Natural killer cell (primary cell): ENCODE measurements at regions of chr15 and their contacts with region 1.

Region 1: DNA sequence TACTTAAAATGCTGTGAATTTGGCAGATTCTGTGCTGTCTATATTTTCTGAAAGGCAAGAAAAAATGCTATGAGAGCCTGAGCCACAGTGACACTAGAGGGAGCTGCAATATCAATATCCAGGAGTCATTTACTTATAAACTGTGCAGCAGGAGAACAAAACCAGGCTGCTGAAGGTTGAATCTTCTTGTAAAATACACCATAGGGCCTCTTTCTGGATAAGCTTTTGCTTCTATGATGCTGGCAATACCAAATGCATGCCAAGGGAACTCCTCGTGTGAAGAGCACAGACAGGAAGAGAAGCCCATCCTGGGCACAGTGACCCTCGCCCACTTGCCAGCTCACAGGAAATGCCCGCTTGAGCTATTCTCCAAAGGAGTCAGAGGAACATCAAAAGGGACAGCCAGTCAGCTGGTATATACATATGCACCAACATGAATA is 48.0 kb upstream of the TSPAN3 start:
- DNase-seq: peak in 1 of 2 donors; percentile 78
- ATAC-seq: peak; percentile 70 to 82 (median 80)
- H3K4me3 ChIP-seq: no peak overlapping the region
- H3K4me3 Mint-ChIP-seq: no peak overlapping the region
- H3K27ac ChIP-seq: no peak overlapping the region
- H3K27ac Mint-ChIP-seq: peak overlapping the region in 1 of 2 donors; percentile 63
- H3K4me1 ChIP-seq: peaks cover 4% of the 10 kb centered on the region
- H3K4me1 Mint-ChIP-seq: peaks cover 9 to 31% of the 10 kb centered on the region in 2 donors
- H3K27me3 ChIP-seq: no peaks in the 10 kb centered on the region
- H3K27me3 Mint-ChIP-seq: no peaks in the 10 kb centered on the region
- CTCF ChIP-seq: peak; percentile 73

Region 2: DNA sequence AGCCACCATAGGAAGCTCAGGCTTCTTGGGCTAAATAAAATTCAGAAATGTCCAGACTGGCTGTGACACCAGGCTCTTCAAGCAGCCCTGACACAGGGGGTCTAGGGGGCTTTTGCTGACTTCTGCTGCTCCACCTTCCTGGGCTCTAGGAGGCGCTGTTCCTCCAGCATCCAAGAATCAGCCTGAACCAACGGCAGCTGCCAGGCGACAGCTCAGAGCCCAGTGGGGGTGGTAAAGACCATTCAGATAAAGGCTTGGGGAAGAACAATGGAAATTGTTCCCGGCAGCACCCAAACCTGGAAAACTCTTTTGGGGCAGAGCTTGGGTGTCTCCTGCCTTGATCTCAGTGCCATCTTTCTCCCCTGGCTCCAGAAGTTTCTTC is 145.5 kb before region 1 on chr15:
- intact Hi-C with region 1: no loop called
- DNase-seq: peak; percentile 66 to 86
- ATAC-seq: peak; percentile 68 to 82 (median 81)
- H3K4me3 ChIP-seq: no peak overlapping the region
- H3K4me3 Mint-ChIP-seq: no peak overlapping the region
- H3K27ac ChIP-seq: no peak overlapping the region
- H3K27ac Mint-ChIP-seq: no peak overlapping the region
- H3K4me1 ChIP-seq: peaks cover 23% of the 10 kb centered on the region
- H3K4me1 Mint-ChIP-seq: peaks cover 19 to 38% of the 10 kb centered on the region in 2 donors
- H3K27me3 ChIP-seq: no peaks in the 10 kb centered on the region
- H3K27me3 Mint-ChIP-seq: no peaks in the 10 kb centered on the region
- CTCF ChIP-seq: peak; percentile 82

Region 3: DNA sequence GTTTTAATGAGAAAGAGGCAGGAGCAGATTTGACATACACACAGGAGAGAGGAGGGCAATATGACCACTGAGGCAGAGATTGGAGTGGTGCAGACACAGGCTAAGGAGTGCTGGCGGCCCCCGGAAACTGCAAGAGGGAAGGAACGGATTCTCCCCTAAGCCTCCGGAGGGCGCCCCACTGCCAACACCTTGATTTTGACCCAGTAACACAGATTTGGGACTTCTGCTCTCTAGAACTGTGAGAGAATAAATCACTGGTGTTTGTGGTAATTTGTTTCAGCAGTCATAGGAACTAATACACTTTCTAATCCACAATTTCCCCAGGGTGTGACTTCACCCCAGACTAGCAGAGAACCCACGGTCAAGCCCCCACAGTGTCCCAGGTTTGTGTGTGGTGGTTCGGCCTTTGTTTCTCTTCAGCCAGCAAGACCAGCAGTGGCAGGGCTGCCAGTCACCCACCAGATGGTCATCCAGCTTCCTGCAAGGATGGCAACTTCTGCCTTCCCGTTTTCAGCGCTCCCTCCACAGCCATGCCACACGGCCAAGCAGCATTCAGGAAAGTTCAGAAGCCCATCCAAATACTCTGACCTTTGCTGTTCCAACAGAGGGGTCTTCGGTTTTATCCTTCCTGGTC is 24.4 kb before region 1 on chr15:
- intact Hi-C with region 1: no loop called
- DNase-seq: no peak
- ATAC-seq: no peak
- H3K4me3 ChIP-seq: no peak overlapping the region
- H3K4me3 Mint-ChIP-seq: no peak overlapping the region
- H3K27ac ChIP-seq: no peak overlapping the region
- H3K27ac Mint-ChIP-seq: no peak overlapping the region
- H3K4me1 ChIP-seq: no peaks in the 10 kb centered on the region
- H3K4me1 Mint-ChIP-seq: no peaks in the 10 kb centered on the region
- H3K27me3 ChIP-seq: no peaks in the 10 kb centered on the region
- H3K27me3 Mint-ChIP-seq: no peaks in the 10 kb centered on the region
- CTCF ChIP-seq: no peak

Region 4: GRCh38 chr15:77148191-77148590 is 29.3 kb after region 1 on chr15:
- intact Hi-C with region 1: no loop called
- DNase-seq: no peak
- ATAC-seq: no peak
- H3K4me3 ChIP-seq: no peak overlapping the region
- H3K4me3 Mint-ChIP-seq: no peak overlapping the region
- H3K27ac ChIP-seq: no peak overlapping the region
- H3K27ac Mint-ChIP-seq: peak overlapping the region in 1 of 2 donors; percentile 11
- H3K4me1 ChIP-seq: peaks cover 6% of the 10 kb centered on the region
- H3K4me1 Mint-ChIP-seq: peaks cover 19 to 22% of the 10 kb centered on the region in 2 donors
- H3K27me3 ChIP-seq: no peaks in the 10 kb centered on the region
- H3K27me3 Mint-ChIP-seq: no peaks in the 10 kb centered on the region
- CTCF ChIP-seq: no peak

Region 5: DNA sequence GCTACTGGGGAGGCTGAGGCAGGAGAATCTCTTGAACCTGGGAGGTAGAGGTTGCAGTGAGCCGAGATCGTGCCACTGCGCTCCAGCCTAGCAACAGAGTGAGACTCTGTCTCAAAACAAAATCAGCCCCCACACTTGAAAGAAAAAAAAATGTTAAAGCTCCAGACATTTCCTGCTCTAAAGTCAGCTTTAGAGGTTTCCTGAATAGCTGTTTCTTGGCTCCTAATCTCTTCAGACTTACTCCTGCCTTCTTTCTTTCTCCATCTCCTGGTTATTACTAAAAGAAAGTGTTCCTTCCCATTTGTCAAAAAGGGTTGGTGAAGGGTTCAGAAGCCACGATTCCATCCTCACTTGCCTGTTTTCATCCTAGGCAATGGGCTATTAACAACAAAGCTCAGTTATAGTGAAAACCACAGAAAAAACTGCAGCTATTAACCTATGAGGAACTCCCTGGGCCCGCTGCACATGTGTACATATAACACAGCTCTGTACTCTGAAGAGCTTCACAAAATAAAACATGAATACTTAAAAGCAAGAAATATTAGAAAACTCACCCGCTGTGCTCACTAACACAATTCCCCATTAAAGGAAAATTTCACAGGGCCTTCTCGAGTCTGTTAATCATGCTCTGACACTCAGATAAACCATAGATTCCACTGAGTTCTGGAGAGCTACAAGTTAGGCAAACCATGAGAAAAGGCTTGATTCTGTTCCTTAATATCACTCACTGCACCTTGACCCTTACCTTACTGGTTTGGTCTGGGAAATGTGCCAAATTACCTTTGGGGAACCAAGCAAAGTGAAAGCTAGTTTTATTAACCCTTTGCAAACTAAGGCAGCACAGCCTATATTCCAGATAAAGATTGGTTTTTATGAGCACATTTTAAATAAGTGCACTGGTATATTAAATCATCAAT is 41.9 kb after region 1 on chr15:
- intact Hi-C with region 1: loop called (anchors 5 kb)
- DNase-seq: peak in 1 of 2 donors; percentile 45
- ATAC-seq: peak; percentile 66 to 71 (median 69)
- H3K4me3 ChIP-seq: no peak overlapping the region
- H3K4me3 Mint-ChIP-seq: peak overlapping the region; percentile 80
- H3K27ac ChIP-seq: peak overlapping the region; percentile 84
- H3K27ac Mint-ChIP-seq: peak overlapping the region; percentile 92 to 93
- H3K4me1 ChIP-seq: peaks cover 35% of the 10 kb centered on the region
- H3K4me1 Mint-ChIP-seq: peaks cover 52 to 58% of the 10 kb centered on the region in 2 donors
- H3K27me3 ChIP-seq: no peaks in the 10 kb centered on the region
- H3K27me3 Mint-ChIP-seq: no peaks in the 10 kb centered on the region
- CTCF ChIP-seq: no peak

Region 6: DNA sequence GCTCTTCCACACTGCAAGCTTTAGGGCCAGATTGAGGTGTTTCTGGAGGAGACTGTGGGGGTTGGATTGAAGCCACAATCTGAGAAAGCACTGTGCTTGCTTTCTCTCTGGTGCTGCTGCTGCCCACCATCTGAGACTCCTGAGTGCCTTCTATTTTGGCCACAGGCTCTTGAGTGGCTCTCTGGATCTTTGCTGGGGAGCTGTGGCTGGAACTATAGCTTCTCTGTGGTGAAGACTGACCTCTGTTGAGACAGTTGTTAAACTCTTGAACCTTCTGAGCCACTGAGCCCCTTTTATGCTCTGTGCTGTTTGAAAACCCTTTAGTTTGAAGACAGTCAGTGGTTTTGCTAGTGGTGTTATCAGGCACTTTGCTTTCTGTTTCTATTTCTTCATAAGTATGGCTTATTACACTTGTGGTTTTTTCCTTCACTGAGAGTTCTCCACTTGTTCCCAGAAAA is 60.7 kb after region 1 on chr15:
- intact Hi-C with region 1: loop called (anchors 2 kb)
- DNase-seq: peak; percentile 26 to 50
- ATAC-seq: peak; percentile 59 to 74 (median 73)
- H3K4me3 ChIP-seq: no peak overlapping the region
- H3K4me3 Mint-ChIP-seq: peak overlapping the region; percentile 79
- H3K27ac ChIP-seq: peak overlapping the region; percentile 75
- H3K27ac Mint-ChIP-seq: peak overlapping the region; percentile 86 to 89
- H3K4me1 ChIP-seq: peaks cover 41% of the 10 kb centered on the region
- H3K4me1 Mint-ChIP-seq: peaks cover 48 to 51% of the 10 kb centered on the region in 2 donors
- H3K27me3 ChIP-seq: no peaks in the 10 kb centered on the region
- H3K27me3 Mint-ChIP-seq: no peaks in the 10 kb centered on the region
- CTCF ChIP-seq: no peak

Region 7: GRCh38 chr15:77186594-77187011 is 67.7 kb after region 1 on chr15:
- intact Hi-C with region 1: loop called (anchors 2 kb)
- DNase-seq: peak in 1 of 2 donors; percentile 59
- ATAC-seq: peak in 2 of 3 donors; percentile 19 to 45
- H3K4me3 ChIP-seq: no peak overlapping the region
- H3K4me3 Mint-ChIP-seq: peak overlapping the region; percentile 45
- H3K27ac ChIP-seq: no peak overlapping the region
- H3K27ac Mint-ChIP-seq: peak overlapping the region; percentile 59 to 74
- H3K4me1 ChIP-seq: peaks cover 39% of the 10 kb centered on the region
- H3K4me1 Mint-ChIP-seq: peaks cover 49 to 50% of the 10 kb centered on the region in 2 donors
- H3K27me3 ChIP-seq: no peaks in the 10 kb centered on the region
- H3K27me3 Mint-ChIP-seq: no peaks in the 10 kb centered on the region
- CTCF ChIP-seq: peak; percentile 79

Region 8: DNA sequence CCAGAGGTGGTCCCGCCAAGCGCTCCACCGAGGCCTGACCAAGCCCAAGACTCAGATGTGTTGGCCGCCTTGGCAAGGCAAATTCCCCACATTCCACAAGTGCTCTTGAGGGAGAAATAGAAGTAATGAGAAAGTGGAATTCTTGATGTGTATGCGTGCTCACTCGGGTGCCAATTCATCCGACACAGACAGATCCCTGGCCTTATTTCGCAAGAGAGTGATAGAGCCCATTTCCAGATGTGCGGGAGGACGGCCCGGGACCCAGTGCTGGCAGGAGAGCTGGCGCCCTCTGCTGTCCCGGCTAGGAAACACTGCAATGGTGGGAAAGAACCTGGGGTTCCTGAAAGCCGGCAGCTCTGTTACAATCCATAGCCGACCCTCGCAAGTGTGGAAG is 377.8 kb after region 1 on chr15:
- intact Hi-C with region 1: loop called (anchors 1 kb)
- DNase-seq: peak; percentile 72 to 81
- ATAC-seq: peak; percentile 80 to 94 (median 92)
- H3K4me3 ChIP-seq: no peak overlapping the region
- H3K4me3 Mint-ChIP-seq: no peak overlapping the region
- H3K27ac ChIP-seq: no peak overlapping the region
- H3K27ac Mint-ChIP-seq: no peak overlapping the region
- H3K4me1 ChIP-seq: peaks cover 17% of the 10 kb centered on the region
- H3K4me1 Mint-ChIP-seq: peaks cover 10 to 17% of the 10 kb centered on the region in 2 donors
- H3K27me3 ChIP-seq: no peaks in the 10 kb centered on the region
- H3K27me3 Mint-ChIP-seq: no peaks in the 10 kb centered on the region
- CTCF ChIP-seq: peak; percentile 96

Region 9: GRCh38 chr15:77543159-77543882 is 424.4 kb after region 1 on chr15:
- intact Hi-C with region 1: loop called (anchors 2 kb)
- DNase-seq: peak; percentile 75 to 85
- ATAC-seq: peak; percentile 86 to 99 (median 97)
- H3K4me3 ChIP-seq: peak overlapping the region; percentile 58
- H3K4me3 Mint-ChIP-seq: peak overlapping the region; percentile 89
- H3K27ac ChIP-seq: no peak overlapping the region
- H3K27ac Mint-ChIP-seq: peak overlapping the region; percentile 34 to 77
- H3K4me1 ChIP-seq: peaks cover 14% of the 10 kb centered on the region
- H3K4me1 Mint-ChIP-seq: peaks cover 0 to 8% of the 10 kb centered on the region in 2 donors
- H3K27me3 ChIP-seq: no peaks in the 10 kb centered on the region
- H3K27me3 Mint-ChIP-seq: no peaks in the 10 kb centered on the region
- CTCF ChIP-seq: peak; percentile 90